H1 (cell line): ENCODE measurements at regions of chr11 and their contacts with region 1.

Region 1: GRCh38 chr11:35292279-35292678 is 127.1 kb downstream of the SLC1A2 start:
- DNase-seq: no peak
- H3K4me3 ChIP-seq: no peak overlapping the region
- H3K27ac ChIP-seq: no peak overlapping the region
- H3K4me1 ChIP-seq: peaks cover 0 to 4% (median 0%) of the 10 kb centered on the region in 4 experiments; a peak in 2 of 7 replicates
- H3K27me3 ChIP-seq: peaks cover 0 to 1% (median 0%) of the 10 kb centered on the region in 4 experiments; a peak in 1 of 7 replicates
- CTCF ChIP-seq: no peak
- EP300 ChIP-seq: no peak
- POLR2A ChIP-seq: no peak
- RAD21 ChIP-seq: no peak

Region 2: DNA sequence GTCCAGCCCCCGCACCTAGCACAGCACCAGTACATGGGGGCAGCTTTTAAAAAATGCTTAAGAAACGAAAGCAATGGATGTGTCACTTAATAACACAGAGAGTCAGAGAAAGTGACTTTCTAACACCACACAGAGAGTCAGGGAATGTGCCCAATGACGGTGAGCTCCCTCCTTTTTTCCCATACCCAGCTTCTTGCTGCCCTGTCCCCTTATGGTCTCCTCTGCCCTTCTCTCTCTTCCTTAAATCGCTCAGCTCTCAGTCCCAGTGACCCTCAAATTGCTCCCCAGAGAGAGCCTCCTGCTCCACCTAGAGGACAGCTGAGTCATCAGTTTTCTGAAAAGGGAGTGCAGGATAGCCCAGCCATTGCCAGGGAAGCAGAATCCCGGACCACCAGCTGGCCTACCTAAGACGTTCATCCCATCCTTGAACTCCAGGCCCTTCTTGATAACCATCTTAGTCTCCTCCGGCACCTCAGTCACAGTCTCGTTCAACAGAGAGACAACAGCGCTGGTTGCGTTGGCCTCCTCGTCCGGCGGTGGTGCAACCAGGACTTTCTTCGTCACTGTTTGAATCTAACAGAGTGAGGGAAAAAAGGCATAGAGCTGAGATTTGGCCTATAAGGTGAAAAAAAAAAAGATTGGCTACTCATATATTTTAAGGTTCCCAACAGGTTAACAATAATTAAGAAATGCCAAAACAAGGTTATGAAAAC is 13.5 kb after region 1 on chr11:
- CTCF ChIA-PET with region 1: interaction called, 36 read pairs
- POLR2A ChIA-PET with region 1: no interaction called
- DNase-seq: peak; percentile 21 to 53
- H3K4me3 ChIP-seq: no peak overlapping the region
- H3K27ac ChIP-seq: no peak overlapping the region
- H3K4me1 ChIP-seq: peaks cover 0 to 2% (median 0%) of the 10 kb centered on the region in 4 experiments; a peak in 1 of 7 replicates
- H3K27me3 ChIP-seq: no peaks in the 10 kb centered on the region
- CTCF ChIP-seq: peak; percentile 48 to 81 (median 68)
- EP300 ChIP-seq: no peak
- POLR2A ChIP-seq: no peak
- RAD21 ChIP-seq: peak; percentile 79 to 84